ENCODE measurements at regions of chr1 and their contacts with region 1.

Region 1: DNA sequence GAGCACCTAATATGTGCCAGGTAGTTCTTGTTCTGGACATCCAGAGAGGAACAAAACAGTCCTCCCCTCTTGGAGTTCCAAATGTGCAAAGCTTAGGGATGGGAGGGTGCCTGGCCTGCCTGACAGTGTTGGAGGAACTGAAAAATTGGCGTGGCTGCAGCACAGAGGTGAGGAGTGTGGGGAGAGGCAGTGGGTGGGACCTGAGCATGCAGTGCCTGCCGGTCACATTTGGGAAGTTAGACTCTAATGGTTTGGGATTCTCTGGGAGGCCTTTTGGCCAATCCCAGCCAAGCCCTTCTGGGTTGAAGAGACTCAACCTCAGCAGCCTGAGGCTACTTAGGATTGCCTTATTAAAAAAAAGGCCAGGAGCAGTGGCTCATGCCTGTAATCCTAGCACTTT is 2.3 kb upstream of the TCEA3 start:
- DNase-seq: no peak
- ATAC-seq: no peak

Region 2: DNA sequence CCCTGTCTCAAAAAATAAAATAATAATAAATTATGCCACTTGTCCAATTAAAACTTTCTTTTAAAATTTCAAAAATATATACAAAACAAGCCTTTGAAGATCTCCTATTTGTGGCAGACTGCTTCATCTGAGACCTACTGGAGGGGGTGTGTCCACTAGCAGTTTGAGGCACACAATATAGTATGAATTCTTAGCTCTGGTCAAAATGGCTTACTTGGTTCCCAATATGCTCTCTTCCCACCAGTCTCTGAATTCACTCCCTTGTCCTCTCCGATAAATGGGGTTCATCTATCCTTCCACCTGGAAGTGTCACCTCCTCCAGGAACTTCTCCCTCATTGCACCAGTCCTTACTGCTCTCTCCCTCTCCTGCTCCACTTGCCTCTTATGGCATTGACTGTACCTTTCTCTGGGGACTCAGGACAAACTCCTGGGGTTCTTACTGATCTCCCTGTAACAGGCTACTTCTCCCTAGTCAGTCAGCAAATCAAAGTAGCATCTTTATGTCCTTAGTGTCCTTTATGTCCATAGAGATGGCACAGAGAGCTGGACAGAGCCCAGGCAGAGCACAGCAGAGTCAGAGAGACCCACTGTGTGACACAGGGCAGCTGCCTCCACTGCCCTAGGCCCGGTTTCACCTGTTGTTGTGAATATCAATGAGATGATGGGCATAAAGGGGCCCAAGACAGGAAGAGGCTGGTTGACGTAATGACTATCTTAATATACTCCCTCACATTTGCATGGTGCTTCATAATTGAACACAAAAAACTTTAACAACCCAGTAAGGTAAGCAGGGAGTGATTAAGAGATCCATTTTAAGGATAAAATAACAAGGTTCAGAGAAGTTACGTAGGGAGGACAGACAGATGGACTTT is 53.6 kb after region 1 on chr1:
- intact Hi-C with region 1: loop called (anchors 2 kb)
- DNase-seq: no peak
- ATAC-seq: no peak

Region 3: GRCh38 chr1:23559136-23559984 is 132.5 kb after region 1 on chr1 and contains the start of gene ID3:
- intact Hi-C with region 1: no loop called
- DNase-seq: peak; percentile 99
- ATAC-seq: peak; percentile 85
- total RNA-seq, gene ID3: 289 TPM

Measured in sciatic nerve (tissue), 2 donors.